ENCODE measurements at regions of chr6 and their contacts with region 1.

Region 1: GRCh38 chr6:145963216-145964068 is 716 bp downstream of the SHPRH start:
- DNase-seq: peak in 8 of 9 experiments; percentile 19 to 63 (median 47)
- ATAC-seq: peak; percentile 22
- H3K4me3 ChIP-seq: peak overlapping the region; percentile 73 to 94
- H3K4me3 Mint-ChIP-seq: peak overlapping the region; percentile 98
- H3K27ac ChIP-seq: peak overlapping the region; percentile 79 to 82
- H3K27ac Mint-ChIP-seq: peak overlapping the region; percentile 99
- H3K4me1 ChIP-seq: peaks cover 28% of the 10 kb centered on the region
- H3K4me1 Mint-ChIP-seq: peaks cover 63% of the 10 kb centered on the region
- H3K27me3 ChIP-seq: no peaks in the 10 kb centered on the region
- H3K27me3 Mint-ChIP-seq: no peaks in the 10 kb centered on the region
- CTCF ChIP-seq: no peak

Region 2: GRCh38 chr6:144055121-144055931 is 1908.1 kb before region 1 on chr6:
- CTCF ChIA-PET with region 1: no interaction called
- POLR2A ChIA-PET with region 1: no interaction called
- intact Hi-C with region 1: loop called in 1 of 2 experiments (anchors 10 kb)
- DNase-seq: peak in 6 of 9 experiments; percentile 30 to 84 (median 60)
- ATAC-seq: peak; percentile 98
- H3K4me3 ChIP-seq: peak overlapping the region; percentile 32 to 38
- H3K4me3 Mint-ChIP-seq: peak overlapping the region; percentile 82
- H3K27ac ChIP-seq: peak overlapping the region; percentile 32 to 80
- H3K27ac Mint-ChIP-seq: peak overlapping the region; percentile 94
- H3K4me1 ChIP-seq: peaks cover 20% of the 10 kb centered on the region
- H3K4me1 Mint-ChIP-seq: peaks cover 31% of the 10 kb centered on the region
- H3K27me3 ChIP-seq: no peaks in the 10 kb centered on the region
- H3K27me3 Mint-ChIP-seq: no peaks in the 10 kb centered on the region
- CTCF ChIP-seq: no peak

Region 3: GRCh38 chr6:145734486-145735355 is 228.7 kb before region 1 on chr6:
- CTCF ChIA-PET with region 1: no interaction called
- POLR2A ChIA-PET with region 1: interaction called, 17 read pairs
- intact Hi-C with region 1: loop called (anchors 1 to 5 kb)
- DNase-seq: peak; percentile 26 to 80 (median 65)
- ATAC-seq: peak; percentile 54
- H3K4me3 ChIP-seq: peak overlapping the region; percentile 52 to 67
- H3K4me3 Mint-ChIP-seq: peak overlapping the region; percentile 96
- H3K27ac ChIP-seq: peak overlapping the region; percentile 52 to 72
- H3K27ac Mint-ChIP-seq: peak overlapping the region; percentile 98
- H3K4me1 ChIP-seq: peaks cover 19% of the 10 kb centered on the region
- H3K4me1 Mint-ChIP-seq: peaks cover 34% of the 10 kb centered on the region
- H3K27me3 ChIP-seq: no peaks in the 10 kb centered on the region
- H3K27me3 Mint-ChIP-seq: no peaks in the 10 kb centered on the region
- CTCF ChIP-seq: no peak

Region 4: DNA sequence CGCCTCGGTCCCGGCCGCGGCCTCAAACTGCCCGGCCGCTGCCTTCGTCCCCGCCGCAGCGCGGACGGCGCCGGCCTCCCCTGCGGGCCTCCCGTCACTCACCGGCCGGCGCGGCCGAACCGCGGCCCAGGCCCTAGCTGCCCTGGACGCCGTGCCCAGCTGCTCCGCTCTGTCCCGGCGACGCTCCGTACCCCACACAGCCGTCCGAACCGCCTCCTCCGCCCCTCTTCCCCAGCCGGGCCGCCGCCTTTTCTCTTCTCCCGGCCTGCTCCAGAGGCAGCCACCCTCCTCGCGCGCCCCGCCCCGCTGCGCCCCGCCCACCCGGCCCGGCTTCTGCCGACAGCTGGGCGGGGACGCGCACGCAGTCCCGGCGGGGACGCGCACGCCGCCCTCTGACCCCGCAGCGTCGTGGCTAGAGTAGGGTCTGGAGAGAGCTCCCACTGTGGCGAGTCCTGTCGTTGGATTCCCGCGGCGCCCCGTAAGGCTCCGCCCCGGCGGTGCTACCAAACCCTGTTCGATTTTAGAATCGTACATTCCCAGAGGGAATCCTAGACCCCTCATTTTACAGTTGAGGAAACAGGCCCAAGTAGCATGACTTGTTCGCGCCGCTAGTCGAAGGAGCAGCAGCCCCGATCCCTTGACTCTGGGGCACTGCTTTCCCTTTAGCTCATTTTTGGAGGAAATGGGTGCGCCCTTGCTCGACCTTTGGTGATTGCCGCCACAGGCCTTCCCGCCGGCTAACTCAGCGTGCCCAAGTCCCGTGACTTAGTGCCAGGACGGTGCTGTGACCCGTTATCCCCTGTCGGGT is 148.7 kb before region 1 on chr6 and contains the start of gene FBXO30:
- CTCF ChIA-PET with region 1: no interaction called
- POLR2A ChIA-PET with region 1: interaction called, 15 read pairs
- intact Hi-C with region 1: loop called (anchors 1 kb)
- DNase-seq: peak; percentile 73 to 94 (median 84)
- ATAC-seq: peak; percentile 89
- H3K4me3 ChIP-seq: peak within 1 kb of the TSS; percentile 80 to 83
- H3K4me3 Mint-ChIP-seq: peak within 1 kb of the TSS; percentile 96
- H3K27ac ChIP-seq: peak within 1 kb of the TSS; percentile 58 to 89
- H3K27ac Mint-ChIP-seq: peak within 1 kb of the TSS; percentile 96
- H3K4me1 ChIP-seq: peaks cover 32% of the 10 kb centered on the region
- H3K4me1 Mint-ChIP-seq: peaks cover 45% of the 10 kb centered on the region
- H3K27me3 ChIP-seq: no peaks in the 10 kb centered on the region
- H3K27me3 Mint-ChIP-seq: no peaks in the 10 kb centered on the region
- CTCF ChIP-seq: peak; percentile 33
- total RNA-seq, gene FBXO30: 1.5 to 1.7 TPM